ENCODE measurements at regions of chr2 and their contacts with region 1.

Region 1: GRCh38 chr2:172038604-172039003 is 38.9 kb downstream of the METAP1D start:
- DNase-seq: peak; percentile 90
- H3K4me3 Mint-ChIP-seq: no peak overlapping the region
- H3K27ac Mint-ChIP-seq: no peak overlapping the region
- H3K4me1 Mint-ChIP-seq: peaks cover 10% of the 10 kb centered on the region
- H3K27me3 Mint-ChIP-seq: no peaks in the 10 kb centered on the region
- CTCF ChIP-seq: no peak

Region 2: DNA sequence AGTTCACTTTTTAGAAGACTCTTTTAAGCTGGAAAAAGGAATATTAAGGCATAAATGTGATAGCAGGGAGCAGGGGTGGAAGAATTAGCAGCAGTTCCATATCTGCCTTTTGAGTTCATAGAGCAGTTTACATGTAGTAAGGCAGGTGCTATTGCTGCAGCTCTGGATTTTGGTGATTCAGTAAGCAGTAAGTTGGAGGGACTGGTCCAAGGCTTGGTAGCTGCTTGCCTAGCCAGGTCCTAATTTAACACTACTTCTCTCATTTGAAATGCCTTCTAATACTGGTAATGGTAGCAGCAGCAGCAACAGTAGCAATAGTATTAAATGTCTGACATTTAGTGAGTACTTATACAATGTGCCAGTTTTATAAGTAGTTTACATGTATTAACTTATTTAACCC is 86.3 kb before region 1 on chr2:
- CTCF ChIA-PET with region 1: no interaction called
- POLR2A ChIA-PET with region 1: no interaction called
- intact Hi-C with region 1: no loop called
- DNase-seq: no peak
- H3K4me3 Mint-ChIP-seq: no peak overlapping the region
- H3K27ac Mint-ChIP-seq: no peak overlapping the region
- H3K4me1 Mint-ChIP-seq: peaks cover 20% of the 10 kb centered on the region
- H3K27me3 Mint-ChIP-seq: no peaks in the 10 kb centered on the region
- CTCF ChIP-seq: no peak

Region 3: DNA sequence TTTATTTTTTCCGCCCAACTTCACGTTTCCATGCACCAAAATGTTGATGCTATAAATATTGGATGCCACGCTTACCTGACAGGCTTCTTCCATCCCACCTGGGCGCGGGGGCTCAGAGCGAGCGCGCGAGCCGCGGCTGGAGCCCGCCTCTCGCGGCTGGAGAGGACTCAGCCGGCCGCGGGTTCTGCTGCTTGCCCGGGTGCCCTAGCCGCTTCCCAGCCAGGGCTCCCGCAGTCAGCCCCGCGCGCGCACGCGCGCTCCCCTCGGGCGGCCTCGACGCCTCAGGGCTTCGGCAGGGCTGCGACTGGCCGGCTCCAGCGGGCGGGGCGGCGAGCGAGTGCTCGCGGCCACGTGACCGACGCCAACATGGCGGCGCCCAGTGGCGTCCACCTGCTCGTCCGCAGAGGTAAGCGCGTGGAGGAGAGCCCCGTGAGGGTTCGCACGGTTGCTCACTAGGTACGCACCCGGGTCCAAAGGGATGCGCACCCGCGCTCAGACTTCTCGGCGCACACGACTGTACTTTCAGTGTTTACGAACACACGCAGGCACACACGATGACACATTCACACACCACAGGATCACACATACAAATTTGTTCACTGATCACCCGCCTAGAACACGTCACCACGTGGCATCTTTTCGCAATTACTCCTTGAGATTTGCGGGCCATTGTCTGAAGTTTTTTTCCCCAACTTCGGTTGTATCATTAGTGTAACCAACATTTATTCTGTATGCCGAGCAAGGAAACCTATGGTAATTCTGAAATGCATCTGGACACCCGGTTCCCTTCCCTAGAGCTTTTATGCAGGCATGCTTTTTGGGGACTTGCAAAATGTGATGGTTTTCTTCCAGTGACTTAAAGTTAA is 38.8 kb before region 1 on chr2 and contains the start of gene METAP1D:
- CTCF ChIA-PET with region 1: no interaction called
- POLR2A ChIA-PET with region 1: interaction called, 14 read pairs
- intact Hi-C with region 1: no loop called
- DNase-seq: peak; percentile 80
- H3K4me3 Mint-ChIP-seq: peak within 1 kb of the TSS; percentile 97
- H3K27ac Mint-ChIP-seq: peak within 1 kb of the TSS; percentile 98
- H3K4me1 Mint-ChIP-seq: peaks cover 16% of the 10 kb centered on the region
- H3K27me3 Mint-ChIP-seq: no peaks in the 10 kb centered on the region
- CTCF ChIP-seq: no peak
- total RNA-seq, gene METAP1D: 9.3 and 9.8 TPM in 2 replicates

Region 4: DNA sequence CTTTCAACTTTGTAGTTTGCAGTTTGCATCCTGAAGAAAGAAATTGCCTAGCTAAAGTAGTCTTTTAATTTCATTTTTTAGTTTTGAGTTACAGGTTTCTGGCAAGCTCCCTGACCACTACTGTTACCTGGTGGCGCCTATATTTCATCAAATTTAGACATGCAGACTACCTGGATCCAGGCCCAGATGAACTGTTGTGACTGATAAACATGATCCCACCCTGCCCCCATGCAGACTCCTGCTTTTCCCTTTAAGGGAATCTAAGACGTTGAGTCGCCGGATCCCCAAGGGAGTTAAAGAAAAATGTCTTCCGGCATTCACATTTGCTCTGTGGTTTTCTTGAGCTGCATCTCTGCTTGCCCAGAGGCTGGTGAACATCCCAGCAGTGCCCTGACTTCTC is 16.6 kb before region 1 on chr2:
- CTCF ChIA-PET with region 1: interaction called, 3 read pairs
- POLR2A ChIA-PET with region 1: interaction called, 12 read pairs
- intact Hi-C with region 1: no loop called
- DNase-seq: peak; percentile 34
- H3K4me3 Mint-ChIP-seq: no peak overlapping the region
- H3K27ac Mint-ChIP-seq: no peak overlapping the region
- H3K4me1 Mint-ChIP-seq: peaks cover 9% of the 10 kb centered on the region
- H3K27me3 Mint-ChIP-seq: no peaks in the 10 kb centered on the region
- CTCF ChIP-seq: no peak

Region 5: DNA sequence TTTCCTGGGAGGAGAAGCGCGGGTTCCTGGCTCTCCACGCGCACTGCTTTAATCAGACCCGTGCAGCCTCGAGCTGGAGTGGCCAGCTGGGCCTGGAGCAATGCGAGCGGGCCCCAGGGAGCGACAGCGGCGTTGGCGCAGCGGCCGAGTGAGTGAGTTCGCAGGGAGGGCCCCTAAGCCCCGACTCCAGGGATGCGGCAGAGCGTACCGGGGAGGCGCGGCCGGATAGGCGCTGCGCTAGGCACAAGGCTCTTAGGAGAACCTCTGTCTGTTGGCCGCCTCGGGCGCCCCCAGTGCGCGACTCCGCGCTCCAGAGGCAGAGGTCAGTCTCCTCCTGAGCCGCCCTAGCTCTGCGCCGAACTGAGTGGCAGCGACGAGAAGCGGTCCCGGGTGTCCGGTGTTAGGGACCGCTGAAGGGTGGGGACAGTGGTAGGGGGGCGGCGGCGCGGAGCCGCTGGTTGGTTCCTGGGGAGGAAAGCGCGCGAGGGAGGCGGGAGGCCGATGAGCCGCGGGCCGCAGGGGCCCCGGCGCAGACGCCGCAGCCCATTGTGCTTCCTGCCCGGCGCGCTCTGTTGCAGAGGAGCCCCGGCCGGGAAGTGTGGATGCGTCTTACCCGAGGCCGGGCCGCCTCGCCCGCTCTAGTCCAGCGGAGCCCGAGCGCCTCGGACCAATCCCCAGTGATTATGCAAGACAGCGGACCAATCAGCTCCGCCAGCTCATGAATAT is 46.3 kb after region 1 on chr2:
- CTCF ChIA-PET with region 1: interaction called, 3 read pairs
- POLR2A ChIA-PET with region 1: interaction called, 10 read pairs
- intact Hi-C with region 1: no loop called
- DNase-seq: peak; percentile 96
- H3K4me3 Mint-ChIP-seq: peak overlapping the region; percentile 80
- H3K27ac Mint-ChIP-seq: peak overlapping the region; percentile 47
- H3K4me1 Mint-ChIP-seq: no peaks in the 10 kb centered on the region
- H3K27me3 Mint-ChIP-seq: no peaks in the 10 kb centered on the region
- CTCF ChIP-seq: no peak